ENCODE measurements at regions of chr6 and their contacts with region 1.

Region 1: GRCh38 chr6:109073344-109074132 is 21.1 kb downstream of the SESN1 start:
- DNase-seq: peak; percentile 55
- ATAC-seq: peak; percentile 66
- H3K4me3 Mint-ChIP-seq: no peak overlapping the region
- H3K27ac Mint-ChIP-seq: no peak overlapping the region
- H3K4me1 Mint-ChIP-seq: peaks cover 19% of the 10 kb centered on the region
- H3K27me3 Mint-ChIP-seq: no peaks in the 10 kb centered on the region

Region 2: DNA sequence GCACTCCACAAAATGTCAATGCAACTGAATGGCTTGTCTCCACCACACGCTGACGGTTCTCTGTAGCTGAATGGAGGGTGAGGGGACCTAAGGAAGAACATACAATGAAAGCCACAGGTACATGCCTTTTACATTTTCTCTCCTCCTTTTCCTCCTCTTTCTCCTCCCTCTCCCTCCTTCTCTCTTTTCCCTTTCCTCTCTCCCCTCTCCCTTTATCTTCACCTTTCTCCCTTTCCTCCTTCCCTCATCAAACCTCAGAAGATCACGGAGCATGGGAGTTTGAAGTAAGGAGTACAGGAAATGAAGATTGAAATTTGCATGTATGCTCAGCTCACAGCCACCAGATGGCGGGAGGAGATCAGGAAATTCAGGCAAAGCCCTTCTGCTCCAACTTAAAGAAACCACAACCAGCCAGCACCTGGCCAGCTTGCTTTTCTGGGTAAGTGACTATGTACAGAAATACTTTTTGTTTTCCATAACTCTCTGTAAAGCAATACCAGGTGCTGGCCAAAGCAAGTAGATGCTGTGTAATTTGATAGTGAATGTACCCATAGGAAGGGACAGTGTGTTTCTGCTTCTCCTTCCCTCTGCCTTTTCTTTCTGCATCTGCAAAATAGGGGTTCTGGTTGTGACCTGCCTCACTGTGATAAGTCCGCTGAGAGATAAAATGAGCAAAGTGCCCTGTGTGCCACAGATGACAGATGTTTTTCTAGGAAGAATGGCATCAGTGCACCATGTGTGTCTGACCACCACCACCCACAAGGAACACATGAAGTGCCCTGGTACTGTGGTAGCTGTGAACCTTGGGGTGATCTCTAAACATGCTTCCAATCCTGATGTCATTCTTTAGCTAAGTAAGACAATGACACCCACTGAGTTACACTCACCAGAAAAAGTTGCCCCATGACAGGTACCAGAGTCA is 531.4 kb before region 1 on chr6:
- CTCF ChIA-PET with region 1: interaction called, 106 read pairs
- POLR2A ChIA-PET with region 1: no interaction called
- intact Hi-C with region 1: loop called (anchors 1 kb)
- DNase-seq: peak; percentile 81
- ATAC-seq: peak; percentile 79
- H3K4me3 Mint-ChIP-seq: no peak overlapping the region
- H3K27ac Mint-ChIP-seq: no peak overlapping the region
- H3K4me1 Mint-ChIP-seq: peaks cover 7% of the 10 kb centered on the region
- H3K27me3 Mint-ChIP-seq: no peaks in the 10 kb centered on the region

Region 3: DNA sequence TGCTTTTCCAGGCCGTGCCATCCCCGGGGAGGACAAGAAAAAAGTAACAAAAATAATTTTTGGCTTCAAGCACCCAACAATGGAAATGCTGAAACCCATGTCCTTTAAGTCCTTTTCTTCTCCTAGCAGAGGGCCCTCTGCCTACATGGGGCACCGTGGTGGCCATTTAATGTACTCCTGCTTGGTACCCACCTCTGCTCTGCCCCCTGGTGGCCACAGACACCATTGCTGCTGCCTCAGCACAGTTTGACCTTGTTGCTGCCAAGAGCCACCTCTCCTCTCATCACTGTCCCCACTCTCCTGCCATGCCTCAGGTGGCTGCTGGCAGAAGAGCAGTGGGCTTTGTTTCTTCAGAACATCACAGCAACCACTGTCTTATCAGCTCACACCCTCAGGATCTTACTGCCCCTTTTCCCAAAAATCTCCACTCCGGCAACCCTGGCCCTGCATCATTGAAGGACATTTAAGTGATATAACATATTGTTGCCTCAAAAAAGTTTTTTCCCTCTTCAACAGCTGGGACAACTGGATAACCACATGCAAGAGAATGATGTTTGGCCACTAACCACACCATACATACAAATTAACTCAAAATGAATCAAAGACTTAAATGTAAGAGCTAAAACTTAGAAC is 238.2 kb before region 1 on chr6:
- CTCF ChIA-PET with region 1: interaction called, 15 read pairs
- POLR2A ChIA-PET with region 1: no interaction called
- intact Hi-C with region 1: loop called (anchors 1 kb)
- DNase-seq: peak; percentile 93
- ATAC-seq: peak; percentile 96
- H3K4me3 Mint-ChIP-seq: no peak overlapping the region
- H3K27ac Mint-ChIP-seq: no peak overlapping the region
- H3K4me1 Mint-ChIP-seq: peaks cover 20% of the 10 kb centered on the region
- H3K27me3 Mint-ChIP-seq: no peaks in the 10 kb centered on the region

Region 4: GRCh38 chr6:108914235-108915022 is 159.1 kb before region 1 on chr6:
- CTCF ChIA-PET with region 1: interaction called, 47 read pairs
- POLR2A ChIA-PET with region 1: no interaction called
- intact Hi-C with region 1: loop called (anchors 1 to 5 kb)
- DNase-seq: peak; percentile 67
- ATAC-seq: peak; percentile 51
- H3K4me3 Mint-ChIP-seq: no peak overlapping the region
- H3K27ac Mint-ChIP-seq: no peak overlapping the region
- H3K4me1 Mint-ChIP-seq: no peaks in the 10 kb centered on the region
- H3K27me3 Mint-ChIP-seq: peaks cover 5% of the 10 kb centered on the region

Region 5: GRCh38 chr6:109050012-109050411 is 23.5 kb before region 1 on chr6:
- CTCF ChIA-PET with region 1: interaction called, 19 read pairs
- POLR2A ChIA-PET with region 1: no interaction called
- intact Hi-C with region 1: no loop called
- DNase-seq: no peak
- ATAC-seq: no peak
- H3K4me3 Mint-ChIP-seq: no peak overlapping the region
- H3K27ac Mint-ChIP-seq: no peak overlapping the region
- H3K4me1 Mint-ChIP-seq: peaks cover 28% of the 10 kb centered on the region
- H3K27me3 Mint-ChIP-seq: no peaks in the 10 kb centered on the region

Region 6: DNA sequence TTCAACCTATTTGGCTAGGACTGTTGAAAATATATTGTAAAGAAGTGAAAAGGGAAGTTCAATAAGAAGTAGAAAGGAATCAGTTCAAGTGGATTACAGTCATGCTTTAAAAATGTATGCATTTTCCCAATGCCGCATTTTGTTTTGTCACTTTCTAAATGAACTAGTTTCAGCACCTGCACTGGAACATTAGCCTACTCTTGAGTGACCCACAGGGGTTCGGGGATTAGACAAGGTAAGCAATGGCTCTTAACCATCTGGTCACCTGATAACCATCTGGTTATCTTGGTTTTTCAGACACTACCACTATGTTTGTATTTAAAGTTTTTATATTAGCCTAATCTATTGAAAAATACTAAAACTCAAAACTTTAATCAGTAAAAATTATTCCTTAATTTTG is 211.1 kb after region 1 on chr6:
- CTCF ChIA-PET with region 1: no interaction called
- POLR2A ChIA-PET with region 1: no interaction called
- intact Hi-C with region 1: no loop called
- DNase-seq: no peak
- ATAC-seq: no peak
- H3K4me3 Mint-ChIP-seq: no peak overlapping the region
- H3K27ac Mint-ChIP-seq: no peak overlapping the region
- H3K4me1 Mint-ChIP-seq: no peaks in the 10 kb centered on the region
- H3K27me3 Mint-ChIP-seq: no peaks in the 10 kb centered on the region